Aorta (tissue), 5 donors: ENCODE measurements at regions of chr2 and their contacts with region 1.

Region 1: DNA sequence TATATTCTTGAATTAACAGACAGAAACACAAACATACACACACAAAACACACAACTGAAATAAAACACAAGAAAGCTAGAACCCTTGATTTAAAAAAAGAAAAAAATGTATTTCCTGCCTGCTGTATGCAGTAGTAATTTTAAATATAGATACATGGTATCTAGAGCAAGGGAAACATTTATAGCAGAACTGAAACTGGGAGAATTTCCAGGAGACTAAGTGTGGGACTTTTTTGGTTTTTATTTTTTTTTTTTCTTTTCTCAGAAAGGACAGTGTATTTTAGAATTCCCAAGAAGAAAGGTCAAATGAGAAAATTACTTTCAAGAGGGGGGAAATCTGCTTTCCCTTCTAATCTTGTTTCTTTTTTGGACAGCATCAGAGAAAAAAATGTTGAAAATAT is 558.9 kb upstream of the PKDCC start:
- DNase-seq: no peak
- ATAC-seq: no peak
- H3K4me3 ChIP-seq: no peak overlapping the region
- H3K27ac ChIP-seq: no peak overlapping the region
- H3K4me1 ChIP-seq: peaks cover 0 to 4% of the 10 kb centered on the region in 2 donors
- H3K27me3 ChIP-seq: no peaks in the 10 kb centered on the region

Region 2: DNA sequence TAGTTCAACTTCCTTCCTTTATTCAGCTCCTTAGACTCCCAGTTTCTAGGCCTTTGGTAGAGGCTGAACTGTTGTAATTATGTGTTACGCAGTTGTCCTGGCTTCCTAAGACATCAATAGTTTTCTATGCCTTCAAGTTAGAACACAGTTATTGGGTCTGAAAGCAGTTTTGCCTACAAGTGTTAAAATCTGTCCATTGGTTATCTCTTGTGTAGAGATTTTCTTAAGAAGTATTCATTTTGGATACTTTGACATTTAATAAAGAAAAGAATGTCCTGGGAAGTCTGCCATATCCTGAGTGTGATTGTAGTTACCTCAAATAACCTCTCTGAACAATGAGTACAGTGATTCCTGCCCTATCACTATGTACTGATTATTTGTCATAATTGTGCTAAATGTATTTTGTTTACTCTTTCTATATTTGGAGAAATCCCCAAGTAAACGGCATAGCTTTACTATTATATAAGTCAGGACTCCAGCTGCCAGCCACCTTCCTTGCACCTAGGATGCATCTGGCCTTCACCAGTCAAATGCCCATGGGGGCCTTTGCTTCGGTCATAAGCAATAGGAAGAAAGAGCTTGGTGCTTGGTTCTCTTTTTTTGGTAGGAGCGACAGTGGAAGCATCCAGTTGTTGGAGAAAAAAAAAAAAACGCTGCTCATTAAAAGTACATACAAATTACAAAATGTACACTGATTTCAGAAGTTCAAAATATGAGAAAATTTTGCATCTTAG is 109.4 kb after region 1 on chr2:
- intact Hi-C with region 1: loop called in 1 of 2 experiments (anchors 10 kb)
- DNase-seq: no peak
- ATAC-seq: peak; percentile 50
- H3K4me3 ChIP-seq: no peak overlapping the region
- H3K27ac ChIP-seq: peak overlapping the region in 1 of 2 donors; percentile 44
- H3K4me1 ChIP-seq: peaks cover 2 to 3% of the 10 kb centered on the region in 2 donors
- H3K27me3 ChIP-seq: no peaks in the 10 kb centered on the region